ENCODE measurements at regions of chr5 and their contacts with region 1.

Region 1: DNA sequence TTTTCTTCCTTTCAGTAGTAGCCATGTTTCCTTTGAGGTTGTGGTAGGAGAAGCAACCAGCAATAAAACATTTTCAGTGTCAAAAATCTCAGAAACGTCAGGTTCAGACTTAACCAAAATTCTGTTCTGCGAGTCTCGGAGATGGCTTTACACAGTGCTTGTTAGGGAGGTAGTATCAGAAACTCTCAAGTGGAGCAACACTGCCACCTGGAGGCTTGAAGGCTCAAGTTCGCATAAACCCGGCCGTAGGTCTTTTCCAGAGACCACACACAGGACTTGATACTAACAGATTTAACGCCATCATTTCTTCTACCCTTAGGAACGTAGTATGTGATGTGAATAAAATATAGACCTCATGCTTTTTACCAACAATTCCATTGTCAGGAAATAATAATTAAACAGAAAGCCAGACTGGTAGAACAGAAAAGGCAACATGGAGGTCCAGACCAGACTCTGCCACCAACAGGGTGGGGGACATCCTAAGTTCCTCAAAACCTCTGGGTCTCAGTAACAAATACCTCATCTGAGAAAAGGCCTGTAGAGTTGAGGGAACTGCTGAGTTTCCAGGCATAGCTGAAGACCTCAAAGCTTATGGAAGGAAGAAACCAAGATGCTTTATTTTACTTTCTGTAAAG is 8.5 kb downstream of the PTGER4 start:
- DNase-seq: peak; percentile 93
- ATAC-seq: peak; percentile 96

Region 2: GRCh38 chr5:38899936-38900335 is 1788.3 kb before region 1 on chr5:
- intact Hi-C with region 1: no loop called
- DNase-seq: no peak
- ATAC-seq: no peak

Region 3: DNA sequence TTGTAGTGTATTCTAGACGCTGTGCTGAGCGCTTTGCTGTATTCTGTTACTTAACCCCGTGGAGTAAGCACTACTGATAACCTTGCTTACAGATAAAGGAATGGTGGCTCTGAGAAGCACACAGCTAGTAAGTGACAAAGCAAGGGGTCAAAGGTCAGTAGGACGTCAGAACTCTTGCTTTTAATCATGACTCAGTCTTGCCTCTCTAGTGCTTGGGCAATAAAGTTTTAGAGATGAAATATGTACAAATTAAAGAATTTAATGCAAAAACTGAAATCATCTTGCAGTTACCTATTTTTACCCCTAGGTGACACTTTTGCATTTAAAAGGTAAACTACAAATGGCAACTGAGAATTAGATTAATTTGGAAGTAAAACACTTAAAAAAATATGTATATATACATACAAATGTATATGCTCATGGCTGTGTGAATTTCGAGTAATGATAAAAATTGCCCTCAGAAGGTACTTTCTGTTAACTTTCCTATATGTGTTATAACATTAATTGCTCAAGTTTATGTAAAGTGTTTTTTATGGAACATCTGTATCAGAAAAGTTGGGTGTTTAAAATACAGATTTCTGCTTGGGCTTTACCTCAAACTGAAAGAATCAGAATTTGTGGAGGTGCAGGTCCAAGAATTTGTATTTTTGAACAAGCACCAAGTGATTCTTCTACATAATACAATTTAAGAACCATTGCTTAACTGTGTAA is 1088.4 kb before region 1 on chr5:
- intact Hi-C with region 1: loop called (anchors 5 kb)
- DNase-seq: no peak
- ATAC-seq: peak; percentile 30

Region 4: DNA sequence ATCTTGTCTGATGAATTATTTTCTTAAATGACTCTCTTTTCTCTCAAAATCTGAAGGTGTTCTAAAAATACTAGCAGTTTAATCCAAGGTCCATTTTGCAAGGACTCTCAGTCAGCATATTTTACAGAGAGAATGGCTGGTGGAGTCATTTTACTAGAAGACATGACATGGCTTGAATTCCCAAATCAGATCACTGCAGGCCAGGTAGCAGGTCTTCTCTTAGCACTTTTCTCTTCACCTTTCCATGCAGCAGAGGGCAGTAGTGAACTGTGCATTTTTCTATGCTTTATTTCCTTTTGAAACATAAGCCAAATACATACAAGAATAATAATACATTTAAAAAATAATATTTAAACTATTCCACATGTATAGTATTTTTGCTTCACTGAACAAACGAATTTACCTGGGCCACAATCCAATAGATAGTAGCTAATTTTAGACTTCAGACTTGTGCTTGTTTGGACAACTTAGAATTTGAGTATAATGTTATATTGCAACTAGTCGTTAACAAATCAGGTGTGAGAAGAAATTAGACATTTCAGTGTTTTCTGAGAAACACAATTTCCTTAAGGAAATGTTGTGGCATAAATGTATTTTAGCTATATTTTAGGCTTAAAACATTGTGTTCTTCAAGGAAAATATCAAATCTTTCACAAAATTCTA is 974.1 kb before region 1 on chr5:
- intact Hi-C with region 1: loop called (anchors 10 kb)
- DNase-seq: no peak
- ATAC-seq: peak; percentile 82

Region 5: DNA sequence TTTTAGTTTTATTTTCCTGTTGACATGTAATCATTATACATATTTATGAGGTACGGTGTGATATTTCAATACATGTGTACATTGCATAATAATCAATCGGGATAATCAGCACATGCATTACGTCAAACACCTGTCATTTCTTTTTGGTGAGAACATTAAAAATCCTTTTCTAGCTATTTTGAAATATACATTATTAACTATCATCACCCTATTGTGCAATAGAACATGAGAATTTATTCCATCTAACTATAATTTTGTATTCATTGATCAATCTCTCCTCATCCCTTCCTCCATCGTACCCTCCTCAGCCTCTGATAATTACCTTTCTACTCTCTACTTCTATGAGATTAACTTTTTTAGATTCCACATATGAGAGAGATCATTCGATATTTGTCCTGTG is 1564.0 kb after region 1 on chr5:
- intact Hi-C with region 1: no loop called
- DNase-seq: no peak
- ATAC-seq: no peak

Measured in sciatic nerve (tissue), 2 donors.